GM13976 (cell line): ENCODE measurements at regions of chr2 and their contacts with region 1.

Region 1: GRCh38 chr2:132547074-132547687 is 122.8 kb downstream of the LYPD1 start:
- DNase-seq: peak; percentile 61
- CTCF ChIP-seq: peak; percentile 54

Region 2: GRCh38 chr2:133166031-133166430 is 618.9 kb after region 1 on chr2:
- in situ Hi-C with region 1: loop called (anchors 10 kb)
- DNase-seq: no peak
- CTCF ChIP-seq: no peak